Endothelial cell of umbilical vein (primary cell): ENCODE measurements at regions of chr14 and their contacts with region 1.

Region 1: DNA sequence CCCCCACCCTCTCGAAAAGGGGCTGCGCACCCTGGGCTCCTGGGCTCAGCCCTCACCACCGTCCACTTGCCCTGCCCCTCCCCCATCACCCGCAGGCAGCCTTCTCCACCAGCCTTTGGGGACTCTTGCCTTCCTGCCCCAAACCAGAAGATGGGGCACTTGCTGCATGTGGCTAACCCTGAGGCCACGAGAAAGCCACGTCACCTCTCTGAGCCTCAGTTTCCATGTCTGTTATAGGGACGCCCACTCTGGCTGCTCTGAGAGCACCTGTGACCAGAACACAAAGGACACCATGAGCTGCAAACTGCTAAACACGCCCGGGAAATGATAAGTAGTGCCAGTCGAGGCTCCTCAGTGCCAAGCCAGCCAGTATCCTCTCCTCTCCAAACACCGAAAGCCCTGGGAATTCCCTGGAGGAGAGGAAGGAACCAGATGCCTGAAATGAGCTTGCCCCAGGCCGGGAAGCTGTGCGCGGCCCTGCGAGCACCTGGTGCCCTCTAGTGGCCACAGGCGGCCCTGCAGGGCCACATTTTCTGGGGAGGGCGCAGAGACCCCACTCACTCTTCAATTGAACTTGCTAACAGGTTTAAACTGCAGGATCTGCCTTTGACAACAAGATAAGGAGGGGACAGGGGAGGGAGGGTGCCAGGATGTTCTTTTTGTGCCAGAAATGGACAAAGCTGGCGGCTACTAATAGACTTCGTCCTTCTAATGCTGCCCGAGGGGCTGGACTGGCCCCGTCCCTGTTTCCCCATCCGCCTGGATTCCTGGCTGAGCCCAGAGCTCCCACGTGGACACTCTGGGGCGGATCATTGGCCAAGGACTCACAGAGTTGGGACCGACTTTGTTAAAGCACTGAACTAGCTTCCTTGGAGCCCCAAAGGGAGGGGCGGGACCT is 10.2 kb upstream of the SERPINA9 start:
- DNase-seq: peak; percentile 24
- H3K4me3 ChIP-seq: no peak overlapping the region
- H3K27ac ChIP-seq: no peak overlapping the region
- H3K4me1 ChIP-seq: no peaks in the 10 kb centered on the region
- H3K27me3 ChIP-seq: no peaks in the 10 kb centered on the region
- CTCF ChIP-seq: peak; percentile 93 to 95
- POLR2A ChIP-seq: no peak

Region 2: DNA sequence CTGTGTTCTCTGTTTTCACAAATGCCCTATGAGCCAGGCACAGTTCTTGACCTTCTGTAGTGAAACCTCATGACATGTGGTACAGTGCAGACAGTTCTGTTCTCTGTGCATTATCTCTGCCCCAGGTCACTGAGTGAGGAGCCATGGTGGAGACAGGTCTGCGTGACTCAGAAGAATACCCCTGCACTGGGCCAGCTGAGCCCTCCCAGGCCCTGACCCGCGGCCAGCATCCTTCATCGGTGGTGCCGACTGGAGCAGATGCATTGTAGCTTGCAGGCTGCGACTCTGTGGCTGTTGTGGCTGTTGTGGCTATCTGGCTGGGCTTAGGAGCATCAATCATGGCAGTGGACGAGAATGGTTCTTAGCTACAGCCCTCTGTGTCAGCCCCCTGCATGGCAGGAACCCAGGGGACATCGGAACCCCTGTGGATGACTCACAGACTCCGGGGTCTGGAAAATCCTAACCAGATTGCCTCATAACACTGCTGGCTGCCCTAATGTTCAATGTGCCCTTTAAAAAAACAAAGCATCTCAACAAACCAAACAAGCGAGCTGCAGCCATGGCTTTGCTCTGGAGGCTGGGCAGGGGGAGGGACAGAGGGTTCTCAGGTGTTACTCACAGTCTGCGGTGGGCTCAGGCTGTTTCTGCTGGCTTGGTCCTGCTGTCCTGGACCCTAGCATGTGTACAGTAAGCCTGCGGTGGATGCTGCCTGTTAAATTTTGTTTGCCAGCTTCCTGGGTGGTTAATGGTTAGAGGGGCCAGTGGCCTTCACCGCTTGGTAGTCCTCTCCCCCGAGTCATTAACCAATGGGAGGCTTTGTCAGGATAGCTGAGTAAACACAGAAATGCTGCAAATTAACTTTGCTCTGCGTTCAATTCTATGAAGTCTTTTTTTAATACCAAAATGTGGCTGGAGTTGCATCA is 163.3 kb before region 1 on chr14 and contains the start of gene SERPINA6:
- CTCF ChIA-PET with region 1: no interaction called
- POLR2A ChIA-PET with region 1: no interaction called
- dilution Hi-C with region 1: no loop called
- intact Hi-C with region 1: no loop called
- DNase-seq: no peak
- H3K4me3 ChIP-seq: no peak within 1 kb of the TSS
- H3K27ac ChIP-seq: no peak within 1 kb of the TSS
- H3K4me1 ChIP-seq: no peaks in the 10 kb centered on the region
- H3K27me3 ChIP-seq: no peaks in the 10 kb centered on the region
- CTCF ChIP-seq: no peak
- POLR2A ChIP-seq: no peak
- total RNA-seq, gene SERPINA6: not detected in 2 replicates

Region 3: GRCh38 chr14:94423453-94424056 is 62.6 kb before region 1 on chr14:
- CTCF ChIA-PET with region 1: interaction called, 19 read pairs
- POLR2A ChIA-PET with region 1: no interaction called
- dilution Hi-C with region 1: no loop called
- intact Hi-C with region 1: loop called (anchors 1 kb)
- DNase-seq: peak; percentile 41
- H3K4me3 ChIP-seq: no peak overlapping the region
- H3K27ac ChIP-seq: no peak overlapping the region
- H3K4me1 ChIP-seq: no peaks in the 10 kb centered on the region
- H3K27me3 ChIP-seq: no peaks in the 10 kb centered on the region
- CTCF ChIP-seq: peak; percentile 64 to 67
- POLR2A ChIP-seq: no peak

Region 4: GRCh38 chr14:94428610-94429009 is 57.6 kb before region 1 on chr14:
- CTCF ChIA-PET with region 1: interaction called, 35 read pairs
- POLR2A ChIA-PET with region 1: no interaction called
- dilution Hi-C with region 1: no loop called
- intact Hi-C with region 1: loop called (anchors 1 kb)
- DNase-seq: no peak
- H3K4me3 ChIP-seq: no peak overlapping the region
- H3K27ac ChIP-seq: no peak overlapping the region
- H3K4me1 ChIP-seq: no peaks in the 10 kb centered on the region
- H3K27me3 ChIP-seq: no peaks in the 10 kb centered on the region
- CTCF ChIP-seq: no peak
- POLR2A ChIP-seq: no peak

Region 5: DNA sequence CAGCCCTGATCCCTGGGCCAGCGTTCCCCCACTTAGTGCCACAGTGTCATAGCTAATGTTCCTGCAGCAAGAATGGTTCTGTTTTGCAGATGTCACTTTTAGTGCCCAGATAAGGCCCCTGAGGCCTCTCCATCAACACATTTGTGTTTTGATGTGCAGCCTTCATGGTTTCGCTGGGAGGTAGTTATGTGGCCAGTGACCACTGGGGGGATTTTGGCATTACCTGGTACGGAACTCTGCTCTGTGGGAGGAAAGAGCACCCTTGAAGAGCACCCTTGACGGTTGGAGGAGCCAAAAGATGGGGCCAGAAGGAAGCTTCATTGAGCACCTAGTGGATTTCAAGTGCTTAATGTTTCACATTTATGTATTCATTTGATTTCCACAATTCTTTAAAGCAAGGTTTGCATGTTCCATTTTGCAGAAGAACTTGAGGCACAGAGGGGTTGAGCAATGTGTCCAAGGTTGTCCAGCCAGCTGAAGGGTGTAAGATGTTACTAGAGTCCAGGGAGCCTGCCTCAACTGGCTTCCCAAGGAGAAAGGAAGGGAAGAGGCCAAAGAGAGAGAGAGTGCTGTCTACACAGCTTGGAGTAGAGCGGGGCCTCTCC is 46.6 kb before region 1 on chr14:
- CTCF ChIA-PET with region 1: interaction called, 4 read pairs
- POLR2A ChIA-PET with region 1: no interaction called
- dilution Hi-C with region 1: no loop called
- intact Hi-C with region 1: loop called (anchors 2 kb)
- DNase-seq: no peak
- H3K4me3 ChIP-seq: no peak overlapping the region
- H3K27ac ChIP-seq: no peak overlapping the region
- H3K4me1 ChIP-seq: no peaks in the 10 kb centered on the region
- H3K27me3 ChIP-seq: no peaks in the 10 kb centered on the region
- CTCF ChIP-seq: no peak
- POLR2A ChIP-seq: no peak

Region 6: GRCh38 chr14:94499673-94500072 is 13.5 kb after region 1 on chr14:
- CTCF ChIA-PET with region 1: interaction called, 13 read pairs
- POLR2A ChIA-PET with region 1: no interaction called
- dilution Hi-C with region 1: no loop called
- intact Hi-C with region 1: no loop called
- DNase-seq: no peak
- H3K4me3 ChIP-seq: no peak overlapping the region
- H3K27ac ChIP-seq: no peak overlapping the region
- H3K4me1 ChIP-seq: no peaks in the 10 kb centered on the region
- H3K27me3 ChIP-seq: no peaks in the 10 kb centered on the region
- CTCF ChIP-seq: no peak
- POLR2A ChIP-seq: no peak

Region 7: DNA sequence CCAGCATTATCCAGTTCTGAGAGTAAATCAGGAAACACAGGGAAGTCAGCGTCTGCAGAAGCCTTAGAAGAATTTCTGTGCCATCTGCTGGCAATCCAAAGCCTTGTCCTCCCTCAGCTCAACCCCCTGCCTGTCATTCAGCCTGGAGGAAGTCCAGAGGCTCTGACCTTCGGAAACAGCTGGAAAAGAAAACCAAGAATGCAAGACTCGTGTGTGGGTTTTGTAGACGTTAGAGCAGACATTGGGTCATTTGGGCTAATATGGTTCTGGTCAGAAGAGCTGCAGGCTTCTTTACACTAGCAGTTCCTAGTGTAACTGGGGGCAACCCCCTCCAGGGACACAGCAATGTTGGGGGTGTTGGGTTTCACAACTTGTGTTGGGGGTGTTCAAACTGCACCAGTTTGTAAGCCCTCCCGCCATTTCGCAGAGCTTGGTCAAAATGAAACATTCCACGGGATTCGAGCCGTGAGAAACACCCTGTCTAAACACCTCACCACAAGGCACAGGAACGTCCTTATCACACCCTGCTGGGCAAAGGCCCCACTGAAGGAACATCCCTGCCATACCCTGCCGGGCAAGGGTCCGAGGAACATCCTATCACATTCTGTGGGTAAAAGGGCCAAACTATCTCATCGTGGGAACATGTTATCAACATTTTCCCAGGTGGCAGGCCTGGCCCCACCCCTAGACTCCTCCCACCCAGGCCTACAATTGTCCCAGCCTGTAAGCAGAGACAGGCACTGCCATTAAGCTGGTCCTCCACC is 54.0 kb after region 1 on chr14:
- CTCF ChIA-PET with region 1: interaction called, 9 read pairs
- POLR2A ChIA-PET with region 1: no interaction called
- dilution Hi-C with region 1: no loop called
- intact Hi-C with region 1: loop called (anchors 2 kb)
- DNase-seq: peak; percentile 43
- H3K4me3 ChIP-seq: no peak overlapping the region
- H3K27ac ChIP-seq: no peak overlapping the region
- H3K4me1 ChIP-seq: peaks cover 23% of the 10 kb centered on the region
- H3K27me3 ChIP-seq: no peaks in the 10 kb centered on the region
- CTCF ChIP-seq: no peak
- POLR2A ChIP-seq: no peak

Region 8: DNA sequence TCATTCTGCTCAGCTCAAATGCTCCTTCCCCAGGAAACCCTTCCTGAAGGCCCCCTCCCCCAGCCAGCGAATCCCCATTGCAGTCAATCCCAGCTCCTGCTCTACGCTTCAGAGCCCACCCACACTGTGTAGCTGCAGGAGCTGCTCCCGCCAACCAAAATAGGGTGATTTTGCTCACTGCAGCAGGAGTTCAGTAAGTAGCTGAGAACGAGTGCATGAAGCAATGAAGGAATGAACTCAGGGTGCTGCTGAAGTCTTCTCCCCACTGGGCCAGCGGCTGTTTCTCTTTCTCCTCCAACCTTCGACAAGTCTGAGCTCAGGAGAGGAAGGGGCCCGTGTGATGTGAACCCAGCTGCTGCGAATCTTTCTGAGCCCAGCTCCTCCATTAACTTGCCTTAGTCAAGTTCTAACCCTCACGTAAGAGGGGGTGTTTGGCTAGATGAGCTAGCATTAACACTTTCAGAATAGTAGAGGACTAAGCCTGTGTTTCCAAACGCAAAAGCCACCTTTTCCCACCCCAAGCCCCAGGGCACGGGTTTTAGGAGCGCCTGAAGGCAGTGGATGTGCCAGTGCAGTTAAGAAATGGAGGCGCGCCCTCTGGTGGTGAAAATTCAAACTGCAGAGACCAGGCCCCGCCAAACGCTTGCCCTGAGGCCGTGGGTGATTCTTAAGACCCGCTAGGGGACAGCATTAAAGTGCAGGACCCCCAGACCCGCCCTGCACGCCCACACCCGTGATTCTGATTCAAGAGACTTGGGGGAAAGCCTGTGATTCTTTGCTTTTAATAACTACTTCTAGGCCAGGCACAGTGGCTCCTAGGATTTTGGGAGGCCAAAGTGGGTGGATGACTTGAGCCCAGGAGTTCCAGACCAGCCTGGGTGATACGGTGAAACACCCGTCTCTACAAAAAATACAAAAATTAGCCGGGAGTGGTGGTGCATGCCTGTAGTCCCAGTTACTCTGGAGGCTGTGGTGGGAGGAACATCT is 63.1 kb after region 1 on chr14:
- CTCF ChIA-PET with region 1: interaction called, 30 read pairs
- POLR2A ChIA-PET with region 1: no interaction called
- dilution Hi-C with region 1: no loop called
- intact Hi-C with region 1: loop called (anchors 1 kb)
- DNase-seq: peak; percentile 38
- H3K4me3 ChIP-seq: no peak overlapping the region
- H3K27ac ChIP-seq: no peak overlapping the region
- H3K4me1 ChIP-seq: no peaks in the 10 kb centered on the region
- H3K27me3 ChIP-seq: no peaks in the 10 kb centered on the region
- CTCF ChIP-seq: peak; percentile 75 to 78
- POLR2A ChIP-seq: no peak

Region 9: GRCh38 chr14:94769391-94770250 is 283.4 kb after region 1 on chr14 and contains the start of gene GSC:
- CTCF ChIA-PET with region 1: no interaction called
- POLR2A ChIA-PET with region 1: no interaction called
- dilution Hi-C with region 1: no loop called
- intact Hi-C with region 1: no loop called
- DNase-seq: peak; percentile 21
- H3K4me3 ChIP-seq: peak within 1 kb of the TSS; percentile 5 to 38 (median 12)
- H3K27ac ChIP-seq: no peak within 1 kb of the TSS
- H3K4me1 ChIP-seq: no peaks in the 10 kb centered on the region
- H3K27me3 ChIP-seq: peaks cover 74 to 94% of the 10 kb centered on the region in 2 experiments
- CTCF ChIP-seq: no peak
- POLR2A ChIP-seq: no peak
- total RNA-seq, gene GSC: not detected in 2 replicates